ENCODE measurements at regions of chr20 and their contacts with region 1.

Region 1: GRCh38 chr20:49713753-49714712 is at the start of gene B4GALT5:
- DNase-seq: peak; percentile 80
- ATAC-seq: peak; percentile 86
- H3K4me3 ChIP-seq: peak within 1 kb of the TSS; percentile 79 to 88 (median 83)
- H3K4me3 Mint-ChIP-seq: peak within 1 kb of the TSS; percentile 94
- H3K27ac ChIP-seq: peak within 1 kb of the TSS; percentile 45 to 75
- H3K27ac Mint-ChIP-seq: peak within 1 kb of the TSS; percentile 92
- H3K4me1 ChIP-seq: peaks cover 20% of the 10 kb centered on the region in 2 donors
- H3K4me1 Mint-ChIP-seq: peaks cover 44% of the 10 kb centered on the region
- H3K27me3 ChIP-seq: no peaks in the 10 kb centered on the region
- H3K27me3 Mint-ChIP-seq: no peaks in the 10 kb centered on the region
- CTCF ChIP-seq: no peak
- total RNA-seq, gene B4GALT5: 7.3 and 7.4 TPM in 2 replicates

Region 2: GRCh38 chr20:49610701-49611538 is 103.1 kb before region 1 on chr20:
- CTCF ChIA-PET with region 1: interaction called, 4 read pairs
- POLR2A ChIA-PET with region 1: no interaction called
- intact Hi-C with region 1: loop called (anchors 5 kb)
- DNase-seq: peak; percentile 84
- ATAC-seq: peak; percentile 88
- H3K4me3 ChIP-seq: peak overlapping the region in 2 of 5 experiments; percentile 15
- H3K4me3 Mint-ChIP-seq: peak overlapping the region; percentile 67
- H3K27ac ChIP-seq: peak overlapping the region in 1 of 2 donors; percentile 6
- H3K27ac Mint-ChIP-seq: no peak overlapping the region
- H3K4me1 ChIP-seq: peaks cover 14 to 20% of the 10 kb centered on the region in 2 donors
- H3K4me1 Mint-ChIP-seq: peaks cover 18% of the 10 kb centered on the region
- H3K27me3 ChIP-seq: peaks cover 0 to 29% (median 8%) of the 10 kb centered on the region in 4 experiments
- H3K27me3 Mint-ChIP-seq: peaks cover 14% of the 10 kb centered on the region
- CTCF ChIP-seq: peak; percentile 100

Region 3: GRCh38 chr20:49631061-49631788 is 82.8 kb before region 1 on chr20:
- CTCF ChIA-PET with region 1: no interaction called
- POLR2A ChIA-PET with region 1: no interaction called
- intact Hi-C with region 1: no loop called
- DNase-seq: no peak
- ATAC-seq: no peak
- H3K4me3 ChIP-seq: no peak overlapping the region
- H3K4me3 Mint-ChIP-seq: no peak overlapping the region
- H3K27ac ChIP-seq: no peak overlapping the region
- H3K27ac Mint-ChIP-seq: no peak overlapping the region
- H3K4me1 ChIP-seq: peaks cover 2 to 40% of the 10 kb centered on the region in 2 donors
- H3K4me1 Mint-ChIP-seq: peaks cover 43% of the 10 kb centered on the region
- H3K27me3 ChIP-seq: peaks cover 0 to 2% (median 0%) of the 10 kb centered on the region in 4 experiments
- H3K27me3 Mint-ChIP-seq: peaks cover 8% of the 10 kb centered on the region
- CTCF ChIP-seq: no peak

Region 4: GRCh38 chr20:49668181-49668877 is 45.7 kb before region 1 on chr20:
- CTCF ChIA-PET with region 1: interaction called, 4 read pairs
- POLR2A ChIA-PET with region 1: interaction called, 4 read pairs
- intact Hi-C with region 1: loop called (anchors 2 kb)
- DNase-seq: peak; percentile 78
- ATAC-seq: peak; percentile 92
- H3K4me3 ChIP-seq: peak overlapping the region in 1 of 5 experiments; percentile 8
- H3K4me3 Mint-ChIP-seq: peak overlapping the region; percentile 81
- H3K27ac ChIP-seq: no peak overlapping the region
- H3K27ac Mint-ChIP-seq: peak overlapping the region; percentile 54
- H3K4me1 ChIP-seq: peaks cover 21 to 22% of the 10 kb centered on the region in 2 donors
- H3K4me1 Mint-ChIP-seq: peaks cover 38% of the 10 kb centered on the region
- H3K27me3 ChIP-seq: no peaks in the 10 kb centered on the region
- H3K27me3 Mint-ChIP-seq: no peaks in the 10 kb centered on the region
- CTCF ChIP-seq: no peak

Region 5: DNA sequence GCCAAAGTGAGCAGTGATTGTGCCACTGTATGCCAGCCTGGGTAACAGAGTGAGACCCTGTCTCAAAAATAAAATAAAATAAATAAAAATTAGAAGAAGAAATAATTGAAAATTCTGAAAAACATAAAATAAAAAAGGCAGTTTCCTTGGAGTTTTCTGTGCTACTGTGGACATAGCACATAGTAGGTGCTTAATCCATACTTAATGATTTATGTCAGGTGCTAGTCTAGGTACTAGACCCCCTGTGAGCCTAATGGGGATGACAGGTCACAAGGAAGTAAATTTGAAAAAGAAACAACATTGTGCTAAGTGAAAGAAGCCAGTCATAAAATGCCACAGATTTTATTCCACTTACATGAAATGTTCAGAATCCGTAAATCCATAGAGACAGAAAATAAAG is 89.4 kb after region 1 on chr20:
- CTCF ChIA-PET with region 1: interaction called, 4 read pairs
- POLR2A ChIA-PET with region 1: no interaction called
- intact Hi-C with region 1: loop called (anchors 2 kb)
- DNase-seq: no peak
- ATAC-seq: no peak
- H3K4me3 ChIP-seq: no peak overlapping the region
- H3K4me3 Mint-ChIP-seq: peak overlapping the region; percentile 55
- H3K27ac ChIP-seq: no peak overlapping the region
- H3K27ac Mint-ChIP-seq: peak overlapping the region; percentile 67
- H3K4me1 ChIP-seq: peaks cover 36 to 47% of the 10 kb centered on the region in 2 donors
- H3K4me1 Mint-ChIP-seq: peaks cover 49% of the 10 kb centered on the region
- H3K27me3 ChIP-seq: peaks cover 0 to 6% (median 3%) of the 10 kb centered on the region in 4 experiments
- H3K27me3 Mint-ChIP-seq: peaks cover 4% of the 10 kb centered on the region
- CTCF ChIP-seq: no peak

Region 6: GRCh38 chr20:49915378-49916145 is 201.5 kb after region 1 on chr20 and contains the start of gene SPATA2:
- CTCF ChIA-PET with region 1: no interaction called
- POLR2A ChIA-PET with region 1: no interaction called
- intact Hi-C with region 1: loop called (anchors 10 kb)
- DNase-seq: peak; percentile 99
- ATAC-seq: peak; percentile 81
- H3K4me3 ChIP-seq: peak within 1 kb of the TSS; percentile 79 to 96 (median 93)
- H3K4me3 Mint-ChIP-seq: peak within 1 kb of the TSS; percentile 99
- H3K27ac ChIP-seq: peak within 1 kb of the TSS; percentile 97 to 99
- H3K27ac Mint-ChIP-seq: peak within 1 kb of the TSS; percentile 100
- H3K4me1 ChIP-seq: peaks cover 12 to 26% of the 10 kb centered on the region in 2 donors
- H3K4me1 Mint-ChIP-seq: peaks cover 31% of the 10 kb centered on the region
- H3K27me3 ChIP-seq: no peaks in the 10 kb centered on the region
- H3K27me3 Mint-ChIP-seq: no peaks in the 10 kb centered on the region
- CTCF ChIP-seq: no peak
- total RNA-seq, gene SPATA2: 10.6 and 10.7 TPM in 2 replicates